Breast epithelium (tissue), 4 donors: ENCODE measurements at regions of chr2 and their contacts with region 1.

Region 1: DNA sequence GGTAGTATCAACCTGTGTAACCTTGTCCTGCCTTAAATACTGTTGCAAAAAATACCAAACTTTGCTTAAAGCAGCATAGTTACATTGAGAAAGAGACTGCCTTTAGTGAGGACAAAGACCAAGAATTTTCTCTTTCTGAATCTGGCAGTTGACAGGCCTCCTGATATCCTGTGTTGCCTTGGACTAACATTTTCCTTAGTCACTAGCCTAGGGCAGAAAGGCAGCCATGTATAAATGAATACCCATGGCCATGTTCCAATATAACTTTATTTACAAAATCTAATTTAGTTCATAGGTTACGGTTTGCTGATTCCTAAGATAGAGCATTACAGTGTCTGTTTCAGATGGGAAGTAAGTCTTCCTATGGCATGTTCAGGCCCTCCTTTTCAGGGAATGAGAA is 895.4 kb downstream of the CNTNAP5 start:
- DNase-seq: no peak
- H3K4me3 ChIP-seq: no peak overlapping the region
- H3K27ac ChIP-seq: no peak overlapping the region
- H3K4me1 ChIP-seq: no peaks in the 10 kb centered on the region
- H3K27me3 ChIP-seq: no peaks in the 10 kb centered on the region
- CTCF ChIP-seq: no peak
- POLR2A ChIP-seq: no peak

Region 2: DNA sequence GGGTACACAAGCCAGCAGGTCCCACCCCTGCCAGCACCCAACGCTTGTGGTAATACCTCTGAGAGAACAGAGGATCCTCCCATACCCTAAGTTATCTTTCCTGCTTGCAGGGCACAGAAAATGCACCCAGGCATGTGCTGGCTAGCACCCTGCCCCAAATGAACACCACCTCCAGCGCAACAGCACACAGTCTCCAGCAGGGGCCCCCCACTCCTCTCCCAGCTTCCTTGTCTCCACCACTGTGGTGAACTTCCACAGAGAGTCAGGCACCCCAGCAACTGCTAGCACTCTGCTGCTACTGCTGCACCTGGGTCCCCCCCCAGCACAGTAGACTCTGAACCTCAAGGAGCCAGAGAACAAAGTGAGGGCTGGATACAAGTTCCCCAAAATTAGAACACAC is 1112.2 kb before region 1 on chr2:
- intact Hi-C with region 1: no loop called
- DNase-seq: no peak
- H3K4me3 ChIP-seq: no peak overlapping the region
- H3K27ac ChIP-seq: no peak overlapping the region
- H3K4me1 ChIP-seq: no peaks in the 10 kb centered on the region
- H3K27me3 ChIP-seq: no peaks in the 10 kb centered on the region
- CTCF ChIP-seq: no peak
- POLR2A ChIP-seq: no peak

Region 3: DNA sequence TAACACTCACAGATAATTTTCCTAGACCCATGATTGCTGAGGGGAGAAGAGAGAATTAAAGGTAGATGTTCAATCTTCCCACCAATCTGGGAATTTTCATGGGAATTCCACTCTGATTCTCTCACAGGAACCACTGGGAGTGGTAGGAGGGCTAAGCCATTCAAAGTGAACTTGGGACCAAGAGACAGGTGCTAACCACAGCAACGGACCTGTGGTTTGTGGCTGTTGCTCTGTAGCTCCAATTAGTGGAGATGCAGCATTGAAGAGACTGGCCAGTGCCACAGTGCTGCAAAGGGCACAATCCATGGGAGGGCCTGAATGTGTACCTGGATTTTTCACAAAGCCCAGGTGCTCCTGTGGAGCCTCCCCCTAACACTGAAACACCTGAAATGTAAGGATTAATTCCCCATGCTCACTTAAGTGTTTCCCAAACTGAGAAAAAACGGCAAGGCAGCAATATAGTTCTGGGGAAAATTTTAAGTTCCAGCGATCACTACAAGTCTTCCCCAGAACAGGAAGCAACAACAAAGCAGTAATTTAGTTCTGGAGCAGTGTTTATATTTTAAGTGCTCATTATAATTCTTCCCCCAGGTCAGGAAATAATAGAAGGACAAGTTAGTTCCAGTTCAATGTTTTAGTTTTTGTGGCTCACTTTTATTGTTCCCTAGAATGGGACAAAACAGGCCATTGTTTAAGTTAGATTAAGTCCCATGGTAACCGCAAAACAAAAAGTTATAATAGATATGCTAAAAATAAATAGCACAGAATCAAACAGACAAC is 150.5 kb after region 1 on chr2:
- intact Hi-C with region 1: no loop called
- DNase-seq: no peak
- H3K4me3 ChIP-seq: no peak overlapping the region
- H3K27ac ChIP-seq: peak overlapping the region in 1 of 2 donors; percentile 5
- H3K4me1 ChIP-seq: no peaks in the 10 kb centered on the region
- H3K27me3 ChIP-seq: no peaks in the 10 kb centered on the region
- CTCF ChIP-seq: no peak
- POLR2A ChIP-seq: no peak

Region 4: DNA sequence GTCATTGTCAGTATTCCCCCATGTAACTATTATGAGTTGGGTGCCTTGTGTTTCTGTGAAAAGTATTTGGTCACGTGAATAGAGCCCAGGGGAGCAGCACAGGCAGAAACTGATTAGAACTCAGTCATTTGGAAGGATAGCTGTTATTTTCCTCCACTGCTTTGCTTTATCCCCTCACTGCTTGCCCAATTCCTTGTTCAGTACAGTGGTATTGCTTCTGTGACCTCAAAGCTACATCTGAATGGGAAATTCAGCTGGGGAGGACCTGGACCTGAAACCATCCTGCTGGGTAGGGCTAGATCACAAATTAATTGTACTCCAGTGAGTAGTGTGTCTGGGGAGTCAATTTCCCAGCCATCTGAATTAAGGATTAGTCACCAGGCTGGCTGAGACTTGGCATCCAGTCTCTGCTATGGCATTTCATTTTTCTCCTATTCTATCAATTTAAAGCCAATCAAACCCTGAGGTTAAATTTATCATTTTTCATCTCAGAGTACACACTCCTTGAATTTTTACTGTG is 503.9 kb after region 1 on chr2:
- intact Hi-C with region 1: loop called (anchors 5 kb)
- DNase-seq: no peak
- H3K4me3 ChIP-seq: no peak overlapping the region
- H3K27ac ChIP-seq: no peak overlapping the region
- H3K4me1 ChIP-seq: no peaks in the 10 kb centered on the region
- H3K27me3 ChIP-seq: no peaks in the 10 kb centered on the region
- CTCF ChIP-seq: no peak
- POLR2A ChIP-seq: no peak